IMR-90 (cell line): ENCODE measurements at regions of chr3 and their contacts with region 1.

Region 1: DNA sequence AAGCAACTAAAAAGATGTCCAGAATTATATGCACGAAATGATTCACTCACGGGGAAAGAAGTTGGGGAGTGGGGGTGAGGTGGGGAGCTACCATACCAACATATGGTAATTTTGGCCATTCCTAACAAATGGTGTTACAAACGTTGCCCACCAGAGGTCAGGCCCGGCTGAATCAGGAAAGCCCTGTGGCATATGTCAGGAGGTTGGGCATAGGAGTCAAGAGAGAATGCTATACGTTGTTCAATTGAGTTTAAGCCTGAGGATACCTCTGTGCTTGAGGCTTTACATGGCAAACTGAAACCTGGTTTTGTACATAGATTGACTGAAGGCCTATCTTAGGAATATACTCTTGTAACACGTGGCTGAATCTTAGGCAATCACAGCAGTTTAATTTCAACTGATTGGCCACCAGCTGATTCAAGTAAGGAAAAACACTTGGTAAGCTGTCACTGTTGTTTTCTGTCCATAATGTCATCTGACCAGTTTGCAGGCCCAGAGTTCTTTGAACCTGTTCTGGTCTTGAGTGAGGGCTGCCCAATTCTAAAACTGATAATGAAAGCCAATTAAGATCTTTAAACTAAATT is 23.4 kb upstream of the SLC2A2 start:
- DNase-seq: peak; percentile 61
- ATAC-seq: peak; percentile 91
- H3K4me3 ChIP-seq: no peak overlapping the region
- H3K27ac ChIP-seq: no peak overlapping the region
- H3K4me1 ChIP-seq: peaks cover 4% of the 10 kb centered on the region; the same call in 1 of the 2 replicates
- H3K27me3 ChIP-seq: no peaks in the 10 kb centered on the region
- CTCF ChIP-seq: peak; percentile 76
- POLR2A ChIP-seq: no peak
- RAD21 ChIP-seq: peak; percentile 84

Region 2: GRCh38 chr3:171001957-171002694 is 47.8 kb before region 1 on chr3:
- CTCF ChIA-PET with region 1: no interaction called
- POLR2A ChIA-PET with region 1: no interaction called
- dilution Hi-C with region 1: no loop called
- in situ Hi-C with region 1: no loop called
- intact Hi-C with region 1: no loop called
- DNase-seq: peak; percentile 66
- ATAC-seq: peak; percentile 58
- H3K4me3 ChIP-seq: no peak overlapping the region
- H3K27ac ChIP-seq: no peak overlapping the region
- H3K4me1 ChIP-seq: peaks cover 13% of the 10 kb centered on the region
- H3K27me3 ChIP-seq: no peaks in the 10 kb centered on the region
- CTCF ChIP-seq: no peak
- POLR2A ChIP-seq: no peak
- RAD21 ChIP-seq: no peak

Region 3: DNA sequence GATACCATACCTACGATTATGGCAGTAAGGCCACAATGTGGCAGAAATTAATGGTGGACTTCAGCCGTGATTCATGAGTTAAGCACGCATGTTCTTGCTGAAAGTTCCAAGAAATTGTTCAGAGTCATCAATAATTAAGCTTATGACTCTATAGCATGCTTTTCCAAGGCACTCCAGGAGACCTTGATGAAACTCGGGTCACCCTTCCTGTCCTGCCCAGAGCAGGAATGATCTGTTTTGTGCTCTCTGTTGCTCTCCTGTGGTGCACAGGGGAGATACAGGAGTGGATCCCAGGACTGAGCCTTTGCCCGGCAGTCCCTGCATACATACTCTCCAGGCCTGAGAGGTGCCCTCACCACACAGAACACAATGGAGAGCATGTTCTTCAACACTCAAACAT is 118.1 kb after region 1 on chr3:
- CTCF ChIA-PET with region 1: no interaction called
- POLR2A ChIA-PET with region 1: no interaction called
- dilution Hi-C with region 1: no loop called
- in situ Hi-C with region 1: no loop called
- intact Hi-C with region 1: loop called (anchors 1 kb)
- DNase-seq: peak; percentile 22
- ATAC-seq: no peak; the same call in 1 of the 2 replicates
- H3K4me3 ChIP-seq: no peak overlapping the region
- H3K27ac ChIP-seq: no peak overlapping the region
- H3K4me1 ChIP-seq: peaks cover 2% of the 10 kb centered on the region; the same call in 1 of the 2 replicates
- H3K27me3 ChIP-seq: no peaks in the 10 kb centered on the region
- CTCF ChIP-seq: peak; percentile 33; the same call in 1 of the 2 replicates
- POLR2A ChIP-seq: no peak
- RAD21 ChIP-seq: peak; percentile 27; the same call in 1 of the 2 replicates

Region 4: GRCh38 chr3:171187706-171188290 is 137.8 kb after region 1 on chr3:
- CTCF ChIA-PET with region 1: interaction called, 5 read pairs
- POLR2A ChIA-PET with region 1: no interaction called
- dilution Hi-C with region 1: no loop called
- in situ Hi-C with region 1: no loop called
- intact Hi-C with region 1: loop called (anchors 1 kb)
- DNase-seq: peak; percentile 48
- ATAC-seq: peak; percentile 73
- H3K4me3 ChIP-seq: no peak overlapping the region
- H3K27ac ChIP-seq: no peak overlapping the region
- H3K4me1 ChIP-seq: 0 out of 2 replicates have a peak, but pooled peaks cover 1% of the 10 kb centered on the region
- H3K27me3 ChIP-seq: no peaks in the 10 kb centered on the region
- CTCF ChIP-seq: peak; percentile 60
- POLR2A ChIP-seq: no peak
- RAD21 ChIP-seq: peak; percentile 76

Region 5: GRCh38 chr3:171566803-171567422 is 517.0 kb after region 1 on chr3:
- CTCF ChIA-PET with region 1: interaction called, 8 read pairs
- POLR2A ChIA-PET with region 1: no interaction called
- dilution Hi-C with region 1: no loop called
- in situ Hi-C with region 1: loop called (anchors 10 kb)
- intact Hi-C with region 1: loop called (anchors 1 kb)
- DNase-seq: peak; percentile 46
- ATAC-seq: peak; percentile 68; the same call in 1 of the 2 replicates
- H3K4me3 ChIP-seq: no peak overlapping the region
- H3K27ac ChIP-seq: no peak overlapping the region
- H3K4me1 ChIP-seq: peaks cover 3% of the 10 kb centered on the region
- H3K27me3 ChIP-seq: peaks cover 3% of the 10 kb centered on the region; the same call in 1 of the 2 replicates
- CTCF ChIP-seq: peak; percentile 83
- POLR2A ChIP-seq: no peak
- RAD21 ChIP-seq: peak; percentile 90